ENCODE measurements at regions of chr5 and their contacts with region 1.

Region 1: DNA sequence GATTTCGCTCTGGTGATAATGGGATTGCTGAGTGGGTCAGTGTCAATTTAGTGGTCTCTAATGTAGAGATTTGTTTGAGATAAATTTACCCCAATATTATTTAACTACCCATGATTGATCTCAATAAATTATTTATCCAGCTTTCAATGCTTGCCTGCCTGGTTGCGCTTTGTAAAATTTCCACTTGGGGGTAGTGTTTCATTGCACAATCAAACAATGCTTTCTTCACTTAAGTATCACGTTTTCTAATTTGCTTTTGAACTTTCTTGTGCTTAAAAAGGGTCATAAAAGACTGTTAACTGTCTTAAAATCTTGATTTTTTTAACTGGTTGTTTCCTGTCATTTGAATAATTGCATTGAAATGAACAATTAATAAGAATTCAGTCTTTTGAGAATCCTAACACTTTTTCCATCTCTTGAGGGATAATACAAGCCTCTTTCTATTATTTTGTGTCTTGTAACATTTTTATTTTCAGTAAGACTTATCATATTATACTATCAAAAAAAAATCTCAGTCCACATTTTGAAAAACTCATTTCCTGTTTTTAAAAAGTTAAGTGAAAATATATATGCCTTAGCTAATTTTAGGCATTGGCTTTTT is 18.7 kb downstream of the HSD17B4 start:
- DNase-seq: peak; percentile 49
- H3K4me3 Mint-ChIP-seq: no peak overlapping the region
- H3K27ac Mint-ChIP-seq: no peak overlapping the region
- H3K4me1 Mint-ChIP-seq: peaks cover 20% of the 10 kb centered on the region
- H3K27me3 Mint-ChIP-seq: no peaks in the 10 kb centered on the region

Region 2: DNA sequence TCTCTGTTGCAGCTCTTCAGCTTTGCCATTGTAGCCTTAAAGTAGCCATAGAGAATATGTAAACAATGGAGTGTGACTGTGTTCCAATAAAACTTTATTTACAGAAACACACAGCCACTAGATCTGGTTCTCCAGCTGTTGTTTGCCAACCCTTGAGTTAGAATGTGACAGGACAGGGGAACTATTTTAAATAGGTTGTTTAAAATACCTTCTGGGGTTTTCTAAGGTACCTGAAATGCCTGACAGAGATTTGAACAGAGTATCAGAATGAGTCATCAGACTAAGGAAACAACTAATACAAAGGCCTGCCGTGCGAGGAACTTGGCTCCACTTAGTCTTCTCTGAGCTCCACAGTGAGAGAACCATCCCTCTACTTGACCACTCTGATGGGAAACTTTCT is 66.8 kb after region 1 on chr5:
- CTCF ChIA-PET with region 1: no interaction called
- intact Hi-C with region 1: no loop called
- DNase-seq: peak; percentile 14
- H3K4me3 Mint-ChIP-seq: no peak overlapping the region
- H3K27ac Mint-ChIP-seq: no peak overlapping the region
- H3K4me1 Mint-ChIP-seq: peaks cover 7% of the 10 kb centered on the region
- H3K27me3 Mint-ChIP-seq: no peaks in the 10 kb centered on the region

Region 3: GRCh38 chr5:119743927-119744326 is 273.0 kb after region 1 on chr5:
- CTCF ChIA-PET with region 1: no interaction called
- intact Hi-C with region 1: loop called (anchors 1 kb)
- DNase-seq: peak; percentile 22
- H3K4me3 Mint-ChIP-seq: no peak overlapping the region
- H3K27ac Mint-ChIP-seq: no peak overlapping the region
- H3K4me1 Mint-ChIP-seq: no peaks in the 10 kb centered on the region
- H3K27me3 Mint-ChIP-seq: peaks cover 3% of the 10 kb centered on the region

Region 4: DNA sequence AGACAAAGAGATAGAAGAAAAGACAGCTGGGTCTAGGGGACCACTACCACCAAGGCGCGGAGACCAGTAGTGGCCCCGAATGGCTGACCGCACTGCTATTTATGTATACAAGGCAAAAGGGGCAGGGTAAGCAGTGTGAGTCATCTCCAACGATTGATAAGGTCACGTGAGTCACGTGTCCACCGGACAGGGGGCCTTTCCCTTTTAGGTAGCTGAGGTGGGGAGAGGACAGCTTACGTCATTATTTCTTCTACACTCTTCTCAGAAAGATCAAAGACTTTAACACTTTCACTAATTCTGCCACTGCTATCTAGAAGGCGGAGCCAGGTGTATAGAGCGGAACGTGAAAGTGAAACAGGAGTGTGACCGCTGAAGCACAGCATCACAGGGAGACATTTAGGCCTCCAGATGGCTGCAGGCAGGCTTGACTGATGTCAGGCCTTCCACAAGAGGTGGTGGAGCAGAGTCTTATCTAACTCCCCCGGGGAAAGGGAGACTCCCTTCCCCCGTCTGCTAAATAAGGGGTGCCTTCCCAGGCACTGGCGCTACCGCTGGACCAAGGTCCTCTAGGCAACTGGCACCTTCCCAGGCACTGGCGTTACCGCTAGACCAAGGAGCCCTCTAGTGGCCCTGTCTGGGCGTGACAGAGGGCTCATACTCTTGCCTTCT is 987.0 kb after region 1 on chr5:
- CTCF ChIA-PET with region 1: no interaction called
- intact Hi-C with region 1: loop called (anchors 5 kb)
- DNase-seq: peak; percentile 53
- H3K4me3 Mint-ChIP-seq: peak overlapping the region; percentile 30
- H3K27ac Mint-ChIP-seq: no peak overlapping the region
- H3K4me1 Mint-ChIP-seq: no peaks in the 10 kb centered on the region
- H3K27me3 Mint-ChIP-seq: peaks cover 10% of the 10 kb centered on the region

Region 5: DNA sequence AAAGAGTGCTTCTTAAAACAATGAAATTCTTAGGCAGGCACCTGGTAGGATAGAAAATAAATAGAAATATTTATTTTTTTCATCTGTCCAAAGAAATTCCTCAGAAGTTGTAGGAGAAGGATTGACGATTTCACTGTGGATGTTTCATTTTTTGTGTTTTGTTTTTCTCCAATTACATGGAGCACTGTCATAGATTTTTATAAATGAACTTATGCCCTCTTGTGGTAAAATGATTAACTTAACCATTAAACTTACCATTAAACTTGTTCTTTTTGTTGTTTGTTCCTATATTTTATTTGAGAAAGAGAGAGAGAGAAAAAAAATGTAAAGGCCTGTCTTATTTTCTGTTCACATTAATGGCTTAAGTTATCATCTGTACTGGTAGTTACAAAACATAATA is 1332.3 kb after region 1 on chr5:
- CTCF ChIA-PET with region 1: no interaction called
- intact Hi-C with region 1: loop called (anchors 5 kb)
- DNase-seq: no peak
- H3K4me3 Mint-ChIP-seq: no peak overlapping the region
- H3K27ac Mint-ChIP-seq: no peak overlapping the region
- H3K4me1 Mint-ChIP-seq: no peaks in the 10 kb centered on the region
- H3K27me3 Mint-ChIP-seq: no peaks in the 10 kb centered on the region

Measured in activated naive CD4-positive, alpha-beta T cell treated with anti-CD3 and anti-CD28 coated beads for 36 hours (primary cell).